Panc1 (cell line): ENCODE measurements at regions of chr1 and their contacts with region 1.

Region 1: GRCh38 chr1:15617175-15617880 is at the start of gene DDI2:
- DNase-seq: peak; percentile 89
- ATAC-seq: peak; percentile 95
- H3K4me3 ChIP-seq: peak within 1 kb of the TSS; percentile 90 to 92
- H3K27ac ChIP-seq: peak within 1 kb of the TSS; percentile 91
- H3K4me1 ChIP-seq: peaks cover 25% of the 10 kb centered on the region
- H3K27me3 ChIP-seq: no peaks in the 10 kb centered on the region
- CTCF ChIP-seq: no peak
- total RNA-seq, gene DDI2: 27.7 TPM

Region 2: GRCh38 chr1:15656464-15656863 is 39.1 kb after region 1 on chr1:
- CTCF ChIA-PET with region 1: no interaction called
- POLR2A ChIA-PET with region 1: no interaction called
- in situ Hi-C with region 1: no loop called
- intact Hi-C with region 1: no loop called
- DNase-seq: no peak
- ATAC-seq: no peak
- H3K4me3 ChIP-seq: no peak overlapping the region
- H3K27ac ChIP-seq: no peak overlapping the region
- H3K4me1 ChIP-seq: no peaks in the 10 kb centered on the region
- H3K27me3 ChIP-seq: no peaks in the 10 kb centered on the region
- CTCF ChIP-seq: no peak

Region 3: GRCh38 chr1:15741183-15741850 is 124.0 kb after region 1 on chr1:
- CTCF ChIA-PET with region 1: no interaction called
- POLR2A ChIA-PET with region 1: no interaction called
- in situ Hi-C with region 1: no loop called
- intact Hi-C with region 1: loop called (anchors 10 kb)
- DNase-seq: peak; percentile 32
- ATAC-seq: peak; percentile 93
- H3K4me3 ChIP-seq: no peak overlapping the region
- H3K27ac ChIP-seq: no peak overlapping the region
- H3K4me1 ChIP-seq: peaks cover 4% of the 10 kb centered on the region
- H3K27me3 ChIP-seq: no peaks in the 10 kb centered on the region
- CTCF ChIP-seq: peak; percentile 98

Region 4: DNA sequence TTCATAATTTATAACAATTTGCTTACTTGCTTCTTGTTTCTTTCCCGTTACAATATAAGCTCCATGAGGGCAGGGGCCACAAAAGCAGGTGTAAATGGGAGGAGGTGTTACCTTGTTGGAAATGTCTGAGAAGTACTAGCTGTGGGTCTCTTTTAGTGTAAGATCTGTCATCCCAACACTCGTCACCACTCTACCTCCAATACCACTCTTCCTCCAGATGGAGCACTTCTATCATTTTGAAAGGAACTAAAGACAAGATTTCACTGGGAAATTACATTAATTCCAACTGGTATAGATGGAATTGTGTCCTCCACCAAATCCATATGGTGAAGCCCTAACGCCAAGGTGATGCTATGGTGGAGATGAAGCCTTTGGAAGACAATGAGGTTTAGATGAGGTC is 672.6 kb after region 1 on chr1:
- CTCF ChIA-PET with region 1: no interaction called
- POLR2A ChIA-PET with region 1: no interaction called
- in situ Hi-C with region 1: no loop called
- intact Hi-C with region 1: no loop called
- DNase-seq: no peak
- ATAC-seq: no peak
- H3K4me3 ChIP-seq: no peak overlapping the region
- H3K27ac ChIP-seq: no peak overlapping the region
- H3K4me1 ChIP-seq: no peaks in the 10 kb centered on the region
- H3K27me3 ChIP-seq: no peaks in the 10 kb centered on the region
- CTCF ChIP-seq: no peak